MCF 10A (cell line): ENCODE measurements at regions of chrX and their contacts with region 1.

Region 1: DNA sequence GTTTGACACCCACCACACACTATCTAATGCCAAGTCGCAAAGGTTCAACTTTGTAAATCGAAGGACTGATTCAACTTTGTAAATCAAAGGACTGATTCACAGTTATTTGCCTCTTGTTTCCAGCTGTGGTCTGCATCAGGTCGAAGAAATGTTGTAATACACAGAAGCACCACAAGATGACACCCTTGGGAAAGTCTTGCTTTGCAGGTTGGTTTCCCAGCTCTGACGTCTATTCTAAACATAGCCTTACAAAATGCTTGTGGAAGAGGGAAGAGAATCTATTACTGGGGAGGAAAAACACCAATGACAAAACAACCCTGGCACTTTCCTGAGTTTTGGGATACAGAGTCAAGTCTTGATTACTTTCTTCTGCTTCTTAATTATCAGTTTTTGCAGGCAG is 35.3 kb downstream of the SUPT20HL1 start:
- DNase-seq: peak; percentile 79
- H3K4me3 Mint-ChIP-seq: no peak overlapping the region
- H3K27ac Mint-ChIP-seq: no peak overlapping the region
- H3K4me1 Mint-ChIP-seq: peaks cover 6% of the 10 kb centered on the region
- H3K27me3 Mint-ChIP-seq: peaks cover 60% of the 10 kb centered on the region
- CTCF ChIP-seq: peak; percentile 68

Region 2: GRCh38 chrX:23782863-23783568 is 612.8 kb before region 1 on chrX and contains the start of gene SAT1:
- CTCF ChIA-PET with region 1: no interaction called
- POLR2A ChIA-PET with region 1: no interaction called
- intact Hi-C with region 1: no loop called
- DNase-seq: peak; percentile 95
- H3K4me3 Mint-ChIP-seq: peak within 1 kb of the TSS; percentile 76
- H3K27ac Mint-ChIP-seq: peak within 1 kb of the TSS; percentile 80
- H3K4me1 Mint-ChIP-seq: peaks cover 23% of the 10 kb centered on the region
- H3K27me3 Mint-ChIP-seq: no peaks in the 10 kb centered on the region
- CTCF ChIP-seq: peak; percentile 56
- total RNA-seq, gene SAT1: 582 and 687 TPM in 2 replicates

Region 3: GRCh38 chrX:24259544-24260240 is 136.1 kb before region 1 on chrX:
- CTCF ChIA-PET with region 1: interaction called, 13 read pairs
- POLR2A ChIA-PET with region 1: no interaction called
- intact Hi-C with region 1: loop called (anchors 1 kb)
- DNase-seq: peak; percentile 81
- H3K4me3 Mint-ChIP-seq: no peak overlapping the region
- H3K27ac Mint-ChIP-seq: no peak overlapping the region
- H3K4me1 Mint-ChIP-seq: no peaks in the 10 kb centered on the region
- H3K27me3 Mint-ChIP-seq: peaks cover 78% of the 10 kb centered on the region
- CTCF ChIP-seq: peak; percentile 69

Region 4: GRCh38 chrX:24380262-24381187 is 15.2 kb before region 1 on chrX:
- CTCF ChIA-PET with region 1: interaction called, 18 read pairs
- POLR2A ChIA-PET with region 1: no interaction called
- intact Hi-C with region 1: no loop called
- DNase-seq: peak; percentile 11
- H3K4me3 Mint-ChIP-seq: no peak overlapping the region
- H3K27ac Mint-ChIP-seq: no peak overlapping the region
- H3K4me1 Mint-ChIP-seq: no peaks in the 10 kb centered on the region
- H3K27me3 Mint-ChIP-seq: peaks cover 66% of the 10 kb centered on the region
- CTCF ChIP-seq: no peak

Region 5: DNA sequence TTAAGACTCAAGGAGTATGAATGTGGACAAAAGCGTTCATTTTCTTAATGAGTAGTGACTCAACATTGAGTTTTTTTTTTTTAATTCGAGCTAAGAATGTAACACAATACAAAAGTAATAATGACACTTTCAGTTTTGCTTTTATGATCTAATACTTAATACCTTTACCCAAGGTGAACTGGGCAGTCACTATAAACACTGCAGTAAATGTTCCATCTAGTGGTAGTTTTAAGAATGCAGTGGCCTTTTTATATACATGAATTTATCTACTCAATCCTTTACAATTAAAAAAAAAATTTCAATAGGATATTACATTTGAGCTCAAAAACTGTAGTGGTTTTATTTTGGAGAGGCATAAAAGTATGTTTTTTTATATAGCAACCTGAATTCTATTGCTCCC is 103.2 kb after region 1 on chrX:
- CTCF ChIA-PET with region 1: interaction called, 310 read pairs
- POLR2A ChIA-PET with region 1: interaction called, 46 read pairs
- intact Hi-C with region 1: loop called (anchors 1 kb)
- DNase-seq: peak; percentile 43
- H3K4me3 Mint-ChIP-seq: no peak overlapping the region
- H3K27ac Mint-ChIP-seq: no peak overlapping the region
- H3K4me1 Mint-ChIP-seq: no peaks in the 10 kb centered on the region
- H3K27me3 Mint-ChIP-seq: peaks cover 31% of the 10 kb centered on the region
- CTCF ChIP-seq: peak; percentile 63

Region 6: GRCh38 chrX:24561121-24561520 is 165.3 kb after region 1 on chrX:
- CTCF ChIA-PET with region 1: no interaction called
- POLR2A ChIA-PET with region 1: no interaction called
- intact Hi-C with region 1: loop called (anchors 1 kb)
- DNase-seq: peak; percentile 43
- H3K4me3 Mint-ChIP-seq: no peak overlapping the region
- H3K27ac Mint-ChIP-seq: no peak overlapping the region
- H3K4me1 Mint-ChIP-seq: no peaks in the 10 kb centered on the region
- H3K27me3 Mint-ChIP-seq: peaks cover 77% of the 10 kb centered on the region
- CTCF ChIP-seq: peak; percentile 22

Region 7: GRCh38 chrX:25144043-25144940 is 748.5 kb after region 1 on chrX:
- CTCF ChIA-PET with region 1: interaction called, 11 read pairs
- POLR2A ChIA-PET with region 1: no interaction called
- intact Hi-C with region 1: loop called (anchors 5 kb)
- DNase-seq: peak; percentile 60
- H3K4me3 Mint-ChIP-seq: peak overlapping the region; percentile 54
- H3K27ac Mint-ChIP-seq: no peak overlapping the region
- H3K4me1 Mint-ChIP-seq: no peaks in the 10 kb centered on the region
- H3K27me3 Mint-ChIP-seq: peaks cover under 1% of the 10 kb centered on the region
- CTCF ChIP-seq: peak; percentile 74